MCF 10A (cell line): ENCODE measurements at regions of chr13 and their contacts with region 1.

Region 1: GRCh38 chr13:94601446-94602431 is at the start of gene GPR180:
- DNase-seq: peak; percentile 100
- H3K4me3 Mint-ChIP-seq: peak within 1 kb of the TSS; percentile 87
- H3K27ac Mint-ChIP-seq: peak within 1 kb of the TSS; percentile 51
- H3K4me1 Mint-ChIP-seq: peaks cover 23% of the 10 kb centered on the region
- H3K27me3 Mint-ChIP-seq: no peaks in the 10 kb centered on the region
- CTCF ChIP-seq: no peak
- total RNA-seq, gene GPR180: 4.8 and 4.9 TPM in 2 replicates

Region 2: DNA sequence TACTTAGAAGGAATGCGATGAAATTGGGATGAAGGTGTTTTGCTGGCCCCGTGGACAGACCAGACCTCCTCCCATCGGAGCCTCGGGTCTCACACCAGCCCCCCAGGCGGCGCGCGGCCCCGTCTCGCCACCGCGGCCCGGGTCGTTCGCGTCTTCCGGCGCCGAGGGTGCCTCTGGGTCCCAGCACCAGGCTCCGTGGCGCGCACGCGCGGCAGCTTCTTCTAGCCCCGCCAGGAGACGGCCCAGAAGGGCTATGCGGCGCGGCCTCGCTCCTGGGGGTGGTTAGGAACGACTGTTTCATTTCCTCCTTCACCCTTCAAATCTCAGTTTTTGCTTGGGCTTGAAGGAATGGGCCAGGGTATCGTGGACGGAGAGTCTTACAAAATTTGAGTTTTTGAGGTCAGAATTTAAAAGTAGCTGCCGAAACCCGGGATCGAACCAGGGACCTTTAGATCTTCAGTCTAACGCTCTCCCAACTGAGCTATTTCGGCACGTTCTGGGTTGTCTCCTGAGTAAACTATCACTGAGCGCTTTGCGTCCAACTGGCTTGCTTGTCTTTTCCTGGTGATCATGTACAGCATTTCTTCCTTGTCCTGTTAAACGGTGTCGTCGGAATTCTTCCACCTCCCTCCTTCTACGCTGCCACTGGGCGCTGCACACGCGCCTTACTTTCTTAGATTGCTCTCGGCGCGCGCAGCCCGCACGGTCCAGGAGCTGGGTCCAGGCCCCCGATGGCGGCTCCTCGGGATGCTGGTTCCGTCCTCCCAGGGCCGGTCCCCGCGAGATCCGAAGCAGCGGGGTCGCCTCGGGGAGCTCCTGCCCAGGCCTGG is 52.3 kb before region 1 on chr13:
- CTCF ChIA-PET with region 1: no interaction called
- POLR2A ChIA-PET with region 1: interaction called, 12 read pairs
- intact Hi-C with region 1: loop called (anchors 2 kb)
- DNase-seq: peak; percentile 86
- H3K4me3 Mint-ChIP-seq: peak overlapping the region; percentile 74
- H3K27ac Mint-ChIP-seq: peak overlapping the region; percentile 86
- H3K4me1 Mint-ChIP-seq: peaks cover 7% of the 10 kb centered on the region
- H3K27me3 Mint-ChIP-seq: no peaks in the 10 kb centered on the region
- CTCF ChIP-seq: no peak

Region 3: DNA sequence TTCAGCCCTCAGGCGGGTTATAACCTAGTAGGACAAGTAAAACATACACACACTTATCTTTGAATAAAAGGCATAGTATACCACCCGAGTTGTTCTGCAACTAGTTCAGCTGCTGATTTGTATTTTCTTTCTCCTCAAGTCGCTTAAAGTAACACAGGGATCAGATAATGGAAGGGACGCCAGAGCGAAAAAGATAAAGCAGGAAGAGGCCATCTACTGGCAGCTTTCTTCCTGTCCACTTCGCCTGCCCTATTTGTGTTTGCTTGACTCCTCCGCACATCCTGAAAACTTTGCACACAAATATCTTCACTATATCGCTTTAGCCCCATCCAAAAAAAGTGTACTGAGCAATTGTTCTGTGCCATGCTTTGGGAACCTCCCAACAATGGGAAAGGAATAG is 348.6 kb after region 1 on chr13:
- CTCF ChIA-PET with region 1: no interaction called
- POLR2A ChIA-PET with region 1: no interaction called
- intact Hi-C with region 1: no loop called
- DNase-seq: no peak
- H3K4me3 Mint-ChIP-seq: no peak overlapping the region
- H3K27ac Mint-ChIP-seq: no peak overlapping the region
- H3K4me1 Mint-ChIP-seq: no peaks in the 10 kb centered on the region
- H3K27me3 Mint-ChIP-seq: no peaks in the 10 kb centered on the region
- CTCF ChIP-seq: no peak